Colonic mucosa (tissue), 4 donors: ENCODE measurements at regions of chr12 and their contacts with region 1.

Region 1: GRCh38 chr12:56160141-56160763 is 2.1 kb downstream of the MYL6 start:
- DNase-seq: no peak
- H3K4me3 ChIP-seq: peak overlapping the region; percentile 76
- H3K27ac ChIP-seq: peak overlapping the region; percentile 96
- H3K4me1 ChIP-seq: peaks cover 8% of the 10 kb centered on the region
- H3K27me3 ChIP-seq: no peaks in the 10 kb centered on the region
- CTCF ChIP-seq: no peak

Region 2: DNA sequence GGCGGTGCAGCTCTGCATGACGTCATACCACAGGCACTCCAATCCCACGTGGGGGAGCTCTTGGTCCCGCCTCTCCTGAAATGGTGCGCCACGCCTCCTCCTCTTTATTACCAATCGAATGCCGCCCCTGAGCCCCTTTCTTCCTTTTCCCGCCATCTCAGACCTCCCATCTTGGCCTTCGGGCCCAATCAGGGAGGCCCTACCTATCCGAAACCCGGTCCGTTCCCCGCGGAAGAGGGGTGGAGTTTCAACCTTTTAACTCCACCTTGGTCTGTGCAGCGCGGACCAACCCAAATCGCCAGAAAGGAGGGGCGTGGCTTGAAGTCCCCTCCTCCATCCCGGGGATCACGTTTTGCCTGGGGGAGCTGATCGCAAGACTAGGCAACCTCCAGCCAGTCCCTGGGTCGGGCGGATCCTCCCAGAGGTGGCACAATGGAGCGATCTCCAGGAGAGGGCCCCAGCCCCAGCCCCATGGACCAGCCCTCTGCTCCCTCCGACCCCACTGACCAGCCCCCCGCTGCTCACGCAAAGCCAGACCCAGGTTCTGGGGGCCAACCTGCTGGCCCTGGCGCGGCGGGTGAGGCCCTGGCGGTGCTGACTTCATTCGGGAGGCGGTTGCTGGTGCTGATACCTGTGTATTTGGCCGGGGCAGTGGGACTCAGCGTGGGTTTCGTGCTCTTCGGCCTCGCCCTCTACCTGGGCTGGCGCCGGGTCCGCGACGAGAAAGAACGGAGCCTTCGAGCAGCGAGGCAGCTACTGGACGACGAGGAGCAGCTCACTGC is 32.2 kb before region 1 on chr12 and contains the start of gene ESYT1:
- intact Hi-C with region 1: loop called (anchors 5 kb)
- DNase-seq: peak; percentile 99
- H3K4me3 ChIP-seq: peak within 1 kb of the TSS; percentile 90
- H3K27ac ChIP-seq: peak within 1 kb of the TSS; percentile 81
- H3K4me1 ChIP-seq: peaks cover 14% of the 10 kb centered on the region
- H3K27me3 ChIP-seq: no peaks in the 10 kb centered on the region
- CTCF ChIP-seq: no peak
- total RNA-seq, gene ESYT1: 63.9 to 72.8 TPM